ENCODE measurements at regions of chr2 and their contacts with region 1.

Region 1: DNA sequence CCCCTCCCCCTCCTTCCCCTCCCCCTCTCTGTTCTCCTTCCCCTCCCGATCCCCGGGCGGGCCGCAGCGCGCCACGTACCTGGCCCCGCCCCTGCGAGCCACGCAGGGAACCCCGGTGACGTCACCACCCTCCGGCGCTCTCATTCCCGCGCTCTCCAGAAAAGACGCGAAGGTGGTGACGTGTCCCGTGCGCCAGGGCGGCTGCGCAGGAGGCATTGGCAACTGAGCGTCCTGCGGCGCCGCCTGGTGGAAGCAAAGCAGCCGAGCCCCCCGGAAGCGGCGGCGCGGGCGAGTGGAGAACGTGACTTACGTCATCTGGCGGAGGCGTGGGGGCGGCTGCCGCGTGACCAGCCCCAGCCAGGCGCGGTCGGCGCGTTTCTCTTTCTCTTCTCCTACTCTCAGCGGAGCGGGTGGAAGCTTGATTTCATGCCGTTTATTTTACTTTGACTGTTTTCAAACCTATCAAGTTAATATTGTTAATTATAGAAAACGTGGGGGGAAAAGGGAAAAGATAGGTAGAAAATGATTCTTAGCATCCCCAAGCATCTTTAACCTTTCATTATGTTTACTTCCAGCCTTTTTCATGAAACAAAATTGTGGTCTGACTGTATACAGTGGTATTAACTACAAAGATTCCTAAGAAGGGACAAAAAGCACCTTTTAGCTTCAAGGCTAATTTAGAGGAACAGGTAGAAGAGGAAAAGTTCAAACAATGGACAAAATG is 48.1 kb downstream of the C2orf42 start:
- DNase-seq: peak; percentile 100
- ATAC-seq: peak; percentile 88 to 92

Region 2: DNA sequence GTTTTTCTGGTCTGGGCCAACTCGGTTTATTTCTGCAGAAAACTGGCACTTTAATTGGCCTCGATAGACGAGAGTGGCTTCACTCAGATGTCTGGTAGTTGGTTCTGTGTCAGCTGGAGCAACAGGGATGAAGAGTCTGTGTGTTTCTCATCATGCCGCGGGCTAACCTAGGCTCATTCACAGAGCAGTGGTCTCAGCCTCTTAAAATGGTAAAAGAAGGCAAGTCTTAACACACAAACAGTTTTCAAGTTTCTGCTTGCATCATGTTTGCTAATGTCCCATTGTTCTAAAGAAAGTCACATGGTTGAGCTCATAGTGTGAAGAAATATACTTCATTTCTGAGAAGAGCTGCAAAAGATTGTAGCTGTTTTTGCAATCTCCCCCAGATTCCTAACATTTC is 438.3 kb before region 1 on chr2:
- intact Hi-C with region 1: no loop called
- DNase-seq: no peak
- ATAC-seq: peak; percentile 26 to 30

Region 3: DNA sequence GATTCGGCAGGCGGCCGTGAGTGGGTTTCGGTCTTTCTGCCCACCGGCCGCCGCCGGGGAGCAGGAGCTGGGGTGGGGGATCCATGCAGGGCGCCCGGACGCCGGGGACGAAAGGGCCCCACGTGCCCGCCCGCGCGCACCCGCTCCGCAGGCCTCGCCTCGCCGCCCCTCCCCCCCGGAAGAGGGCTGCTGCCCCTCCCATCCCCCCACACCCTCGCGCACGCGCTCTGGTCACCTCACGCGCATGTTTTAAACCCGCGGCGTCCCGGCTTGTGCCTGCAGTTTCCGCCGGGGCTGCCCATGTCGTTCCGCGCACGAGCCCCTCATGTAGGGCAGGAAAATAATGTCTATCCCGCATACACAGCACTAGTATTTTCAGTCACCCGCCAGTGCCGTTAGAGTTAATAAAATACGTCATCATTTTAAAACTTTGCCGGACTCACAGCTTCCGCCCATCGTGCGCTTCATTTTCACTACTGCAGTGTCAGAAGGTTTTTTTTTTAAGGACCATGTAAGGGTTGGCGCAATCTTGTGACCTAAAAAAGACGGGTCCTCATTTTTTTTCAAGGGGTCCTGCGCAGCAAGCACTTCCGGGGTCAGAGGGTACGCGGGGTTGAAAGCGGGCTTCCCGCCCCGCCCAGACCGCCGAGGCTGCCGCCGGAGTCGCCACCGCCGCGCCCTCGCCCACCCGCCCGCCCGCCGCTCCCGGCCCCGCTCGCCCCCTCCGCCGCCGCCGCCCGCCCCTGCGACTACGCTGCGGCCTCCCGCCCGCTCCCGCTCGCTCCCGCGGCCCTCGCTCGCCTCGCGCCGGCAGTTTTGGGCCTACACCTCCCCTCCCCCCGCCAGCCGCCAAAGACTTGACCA is 55.7 kb before region 1 on chr2 and contains the start of gene PCBP1:
- intact Hi-C with region 1: loop called (anchors 1 to 2 kb)
- DNase-seq: peak; percentile 97
- ATAC-seq: peak; percentile 86 to 91
- total RNA-seq, gene PCBP1: 230 to 248 TPM